Left ventricle myocardium superior (tissue), 1 donor: ENCODE measurements at regions of chr10 and their contacts with region 1.

Region 1: GRCh38 chr10:95423164-95424005 is 132.6 kb upstream of the PDLIM1 start:
- DNase-seq: no peak
- ATAC-seq: peak; percentile 30

Region 2: DNA sequence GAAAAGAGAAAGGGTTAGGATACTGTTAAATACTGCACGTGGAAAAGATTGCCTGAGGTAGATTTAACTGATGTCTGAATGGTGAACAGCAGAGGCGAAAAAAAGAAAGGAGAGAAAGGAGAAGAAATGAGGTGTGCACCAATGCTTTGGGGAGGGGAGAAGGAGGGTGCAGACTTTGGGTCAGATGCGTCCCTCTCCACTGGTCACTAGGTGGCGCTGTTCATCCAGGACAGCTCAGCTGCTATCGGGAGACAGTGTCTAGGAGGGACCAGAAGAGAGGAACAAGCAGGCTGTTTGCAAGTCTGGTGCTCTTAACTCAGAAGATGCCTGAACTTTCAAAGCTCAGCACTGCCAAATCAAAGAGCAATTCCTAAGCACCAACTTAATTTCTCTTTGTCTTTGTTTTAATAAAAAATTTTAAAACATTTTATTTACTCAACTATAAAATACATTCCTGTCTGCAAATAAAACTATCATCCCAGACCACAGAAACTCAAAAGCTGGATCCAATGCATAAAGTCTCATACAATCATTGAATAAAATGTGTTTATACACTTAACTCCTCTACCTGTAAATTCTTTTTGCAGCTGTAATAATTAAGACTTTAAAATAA is 48.7 kb before region 1 on chr10:
- intact Hi-C with region 1: loop called (anchors 10 kb)
- DNase-seq: peak; percentile 73
- ATAC-seq: peak; percentile 77